Naive thymus-derived CD4-positive, alpha-beta T cell (primary cell): ENCODE measurements at regions of chr1 and their contacts with region 1.

Region 1: DNA sequence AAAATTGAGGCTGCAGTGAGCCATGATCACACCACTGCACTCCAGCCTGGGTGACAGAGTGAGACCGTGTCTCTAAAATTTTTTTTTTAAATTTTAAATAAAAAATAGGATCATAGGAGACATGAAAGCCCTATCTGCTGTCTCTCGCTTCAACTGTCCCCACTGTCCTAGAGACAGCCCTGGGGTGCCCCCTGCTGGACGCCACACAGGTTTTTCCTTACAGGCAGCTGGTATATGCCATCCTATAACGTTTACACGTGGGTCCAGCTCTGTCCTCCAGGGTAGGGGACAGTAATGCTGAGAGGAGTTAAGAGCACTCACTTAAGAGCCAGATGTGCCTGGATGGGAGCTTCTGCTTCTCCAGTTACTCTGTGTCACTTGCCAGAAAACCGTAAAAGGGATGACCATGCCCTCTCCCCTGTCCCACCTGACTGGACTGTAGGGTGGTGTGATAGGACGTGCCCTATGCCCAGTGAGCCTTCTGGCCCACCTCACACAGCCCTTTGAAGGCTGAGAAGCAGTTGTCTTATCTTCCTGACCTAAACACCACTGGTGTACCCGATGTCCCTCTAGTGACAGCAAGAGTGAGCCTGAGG is 8.5 kb downstream of the FBXO2 start:
- DNase-seq: peak; percentile 60 to 81 (median 74)
- ATAC-seq: peak; percentile 68
- H3K4me3 ChIP-seq: no peak overlapping the region
- H3K4me3 Mint-ChIP-seq: no peak overlapping the region
- H3K27ac ChIP-seq: no peak overlapping the region
- H3K27ac Mint-ChIP-seq: no peak overlapping the region
- H3K4me1 ChIP-seq: peaks cover 2 to 15% of the 10 kb centered on the region in 2 donors
- H3K4me1 Mint-ChIP-seq: peaks cover 2 to 20% (median 12%) of the 10 kb centered on the region in 7 donors
- H3K27me3 ChIP-seq: no peaks in the 10 kb centered on the region
- H3K27me3 Mint-ChIP-seq: peaks cover 0 to 14% (median 0%) of the 10 kb centered on the region in 5 donors

Region 2: GRCh38 chr1:11216074-11216473 is 429.7 kb before region 1 on chr1:
- CTCF ChIA-PET with region 1: interaction called, 10 read pairs
- POLR2A ChIA-PET with region 1: no interaction called
- intact Hi-C with region 1: no loop called
- DNase-seq: no peak
- ATAC-seq: no peak
- H3K4me3 ChIP-seq: no peak overlapping the region
- H3K4me3 Mint-ChIP-seq: no peak overlapping the region
- H3K27ac ChIP-seq: no peak overlapping the region
- H3K27ac Mint-ChIP-seq: peak overlapping the region in 1 of 9 donors; percentile 31
- H3K4me1 ChIP-seq: no peaks in the 10 kb centered on the region
- H3K4me1 Mint-ChIP-seq: peaks cover 0 to 5% (median 0%) of the 10 kb centered on the region in 7 donors
- H3K27me3 ChIP-seq: no peaks in the 10 kb centered on the region
- H3K27me3 Mint-ChIP-seq: no peaks in the 10 kb centered on the region

Region 3: GRCh38 chr1:11320153-11320936 is 325.4 kb before region 1 on chr1:
- CTCF ChIA-PET with region 1: interaction called, 5 read pairs
- POLR2A ChIA-PET with region 1: no interaction called
- intact Hi-C with region 1: loop called in 1 of 2 experiments (anchors 1 kb)
- DNase-seq: peak in 5 of 9 donors; percentile 10 to 45 (median 24)
- ATAC-seq: no peak
- H3K4me3 ChIP-seq: no peak overlapping the region
- H3K4me3 Mint-ChIP-seq: peak overlapping the region in 3 of 10 donors; percentile 14 to 54 (median 48)
- H3K27ac ChIP-seq: no peak overlapping the region
- H3K27ac Mint-ChIP-seq: no peak overlapping the region
- H3K4me1 ChIP-seq: peaks cover 0 to 5% of the 10 kb centered on the region in 2 donors
- H3K4me1 Mint-ChIP-seq: peaks cover 2 to 8% (median 6%) of the 10 kb centered on the region in 7 donors
- H3K27me3 ChIP-seq: no peaks in the 10 kb centered on the region
- H3K27me3 Mint-ChIP-seq: peaks cover 0 to 7% (median 2%) of the 10 kb centered on the region in 5 donors

Region 4: GRCh38 chr1:11478571-11479374 is 167.0 kb before region 1 on chr1 and contains the start of gene DISP3:
- CTCF ChIA-PET with region 1: no interaction called
- POLR2A ChIA-PET with region 1: no interaction called
- intact Hi-C with region 1: loop called (anchors 1 to 10 kb)
- DNase-seq: peak; percentile 42 to 79 (median 62)
- ATAC-seq: peak; percentile 94
- H3K4me3 ChIP-seq: peak within 1 kb of the TSS; percentile 47
- H3K4me3 Mint-ChIP-seq: peak within 1 kb of the TSS; percentile 59 to 83 (median 66)
- H3K27ac ChIP-seq: no peak within 1 kb of the TSS
- H3K27ac Mint-ChIP-seq: no peak within 1 kb of the TSS
- H3K4me1 ChIP-seq: peaks cover 0 to 4% of the 10 kb centered on the region in 2 donors
- H3K4me1 Mint-ChIP-seq: peaks cover 4 to 18% (median 16%) of the 10 kb centered on the region in 7 donors
- H3K27me3 ChIP-seq: peaks cover 0 to 6% of the 10 kb centered on the region in 2 donors
- H3K27me3 Mint-ChIP-seq: peaks cover 32 to 43% (median 42%) of the 10 kb centered on the region in 5 donors
- total RNA-seq, gene DISP3: 0.14 to 0.95 (median 0.24) TPM

Region 5: GRCh38 chr1:11501558-11501897 is 144.2 kb before region 1 on chr1:
- CTCF ChIA-PET with region 1: no interaction called
- POLR2A ChIA-PET with region 1: no interaction called
- intact Hi-C with region 1: no loop called
- DNase-seq: peak in 5 of 9 donors; percentile 2 to 39 (median 21)
- ATAC-seq: peak; percentile 68
- H3K4me3 ChIP-seq: no peak overlapping the region
- H3K4me3 Mint-ChIP-seq: peak overlapping the region in 4 of 10 donors; percentile 14 to 69 (median 49)
- H3K27ac ChIP-seq: no peak overlapping the region
- H3K27ac Mint-ChIP-seq: no peak overlapping the region
- H3K4me1 ChIP-seq: no peaks in the 10 kb centered on the region
- H3K4me1 Mint-ChIP-seq: peaks cover 0 to 4% (median 0%) of the 10 kb centered on the region in 7 donors
- H3K27me3 ChIP-seq: peaks cover 0 to 3% of the 10 kb centered on the region in 2 donors
- H3K27me3 Mint-ChIP-seq: peaks cover 7 to 33% (median 12%) of the 10 kb centered on the region in 5 donors

Region 6: GRCh38 chr1:11558871-11559590 is 86.7 kb before region 1 on chr1:
- CTCF ChIA-PET with region 1: no interaction called
- POLR2A ChIA-PET with region 1: no interaction called
- intact Hi-C with region 1: no loop called
- DNase-seq: no peak
- ATAC-seq: no peak
- H3K4me3 ChIP-seq: no peak overlapping the region
- H3K4me3 Mint-ChIP-seq: no peak overlapping the region
- H3K27ac ChIP-seq: no peak overlapping the region
- H3K27ac Mint-ChIP-seq: no peak overlapping the region
- H3K4me1 ChIP-seq: no peaks in the 10 kb centered on the region
- H3K4me1 Mint-ChIP-seq: peaks cover 0 to 5% (median 0%) of the 10 kb centered on the region in 7 donors
- H3K27me3 ChIP-seq: peaks cover 0 to 1% of the 10 kb centered on the region in 2 donors
- H3K27me3 Mint-ChIP-seq: peaks cover 31 to 61% (median 53%) of the 10 kb centered on the region in 5 donors

Region 7: GRCh38 chr1:11719313-11720032 is 73.7 kb after region 1 on chr1:
- CTCF ChIA-PET with region 1: interaction called, 18 read pairs
- POLR2A ChIA-PET with region 1: interaction called, 28 read pairs
- intact Hi-C with region 1: loop called (anchors 1 kb)
- DNase-seq: peak; percentile 73 to 89 (median 82)
- ATAC-seq: peak; percentile 92
- H3K4me3 ChIP-seq: peak overlapping the region; percentile 66
- H3K4me3 Mint-ChIP-seq: peak overlapping the region; percentile 71 to 89 (median 86)
- H3K27ac ChIP-seq: peak overlapping the region; percentile 62
- H3K27ac Mint-ChIP-seq: peak overlapping the region; percentile 73 to 97 (median 93)
- H3K4me1 ChIP-seq: peaks cover 0 to 5% of the 10 kb centered on the region in 2 donors
- H3K4me1 Mint-ChIP-seq: peaks cover 8 to 21% (median 15%) of the 10 kb centered on the region in 7 donors
- H3K27me3 ChIP-seq: no peaks in the 10 kb centered on the region
- H3K27me3 Mint-ChIP-seq: peaks cover 0 to 10% (median 0%) of the 10 kb centered on the region in 5 donors

Region 8: GRCh38 chr1:11805447-11806306 is 159.9 kb after region 1 on chr1 and contains the starts of genes CLCN6 and MTHFR:
- CTCF ChIA-PET with region 1: no interaction called
- POLR2A ChIA-PET with region 1: no interaction called
- intact Hi-C with region 1: loop called (anchors 5 to 10 kb)
- DNase-seq: peak; percentile 93 to 98 (median 97)
- ATAC-seq: peak; percentile 95
- H3K4me3 ChIP-seq: peak within 1 kb of the TSS; percentile 86
- H3K4me3 Mint-ChIP-seq: peak within 1 kb of the TSS; percentile 94 to 100 (median 98)
- H3K27ac ChIP-seq: peak within 1 kb of the TSS; percentile 92
- H3K27ac Mint-ChIP-seq: peak within 1 kb of the TSS; percentile 94 to 99 (median 96)
- H3K4me1 ChIP-seq: peaks cover 39 to 40% of the 10 kb centered on the region in 2 donors
- H3K4me1 Mint-ChIP-seq: peaks cover 37 to 72% (median 60%) of the 10 kb centered on the region in 7 donors
- H3K27me3 ChIP-seq: no peaks in the 10 kb centered on the region
- H3K27me3 Mint-ChIP-seq: no peaks in the 10 kb centered on the region
- total RNA-seq, gene CLCN6: 13.3 to 23.0 (median 20.9) TPM
- total RNA-seq, gene MTHFR: 31.0 to 64.4 (median 55.2) TPM

Region 9: DNA sequence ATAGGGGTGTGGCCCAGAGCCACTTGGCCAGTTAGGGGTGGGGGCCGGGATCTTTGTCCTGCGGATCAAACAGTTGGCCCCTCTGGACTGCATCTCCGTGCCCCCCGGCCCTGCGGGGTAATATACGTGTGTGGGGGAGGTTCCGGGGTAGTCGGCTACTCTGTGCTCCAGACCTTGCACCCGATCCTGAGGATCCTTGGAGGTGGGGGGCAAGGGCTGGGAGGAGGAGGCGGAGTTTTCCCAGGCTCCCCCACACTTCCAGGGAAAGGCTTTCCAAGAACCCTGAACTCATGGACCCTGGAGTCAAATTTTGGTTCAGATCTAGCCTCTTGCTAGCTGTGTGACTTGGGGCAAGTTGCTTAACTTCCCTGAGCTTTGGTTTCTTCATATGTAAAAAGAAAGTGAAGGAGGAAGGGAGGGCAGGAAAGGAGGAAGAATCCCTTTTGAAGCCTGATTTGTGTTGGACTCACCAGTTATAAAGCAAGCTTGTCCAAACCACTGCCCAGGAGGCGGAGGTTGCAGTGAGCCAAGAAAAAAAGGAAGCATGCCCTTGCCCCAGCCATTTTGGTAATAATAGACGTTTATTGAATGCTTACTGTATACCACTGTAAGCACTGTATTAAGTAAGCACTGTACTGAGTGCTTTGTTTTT is 374.2 kb after region 1 on chr1:
- CTCF ChIA-PET with region 1: no interaction called
- POLR2A ChIA-PET with region 1: no interaction called
- intact Hi-C with region 1: loop called in 1 of 2 experiments (anchors 1 kb)
- DNase-seq: no peak
- ATAC-seq: no peak
- H3K4me3 ChIP-seq: peak overlapping the region; percentile 77
- H3K4me3 Mint-ChIP-seq: peak overlapping the region; percentile 82 to 99 (median 92)
- H3K27ac ChIP-seq: peak overlapping the region; percentile 73
- H3K27ac Mint-ChIP-seq: peak overlapping the region in 8 of 9 donors; percentile 43 to 97 (median 89)
- H3K4me1 ChIP-seq: no peaks in the 10 kb centered on the region
- H3K4me1 Mint-ChIP-seq: peaks cover 0 to 35% (median 17%) of the 10 kb centered on the region in 7 donors
- H3K27me3 ChIP-seq: no peaks in the 10 kb centered on the region
- H3K27me3 Mint-ChIP-seq: peaks cover 0 to 3% (median 0%) of the 10 kb centered on the region in 5 donors